ENCODE measurements at regions of chr3 and their contacts with region 1.

Region 1: GRCh38 chr3:151282921-151283320 is 4.6 kb upstream of the P2RY14 start:
- DNase-seq: no peak
- H3K4me3 Mint-ChIP-seq: no peak overlapping the region
- H3K27ac Mint-ChIP-seq: peak overlapping the region; percentile 72
- H3K4me1 Mint-ChIP-seq: peaks cover 51% of the 10 kb centered on the region
- H3K27me3 Mint-ChIP-seq: no peaks in the 10 kb centered on the region

Region 2: DNA sequence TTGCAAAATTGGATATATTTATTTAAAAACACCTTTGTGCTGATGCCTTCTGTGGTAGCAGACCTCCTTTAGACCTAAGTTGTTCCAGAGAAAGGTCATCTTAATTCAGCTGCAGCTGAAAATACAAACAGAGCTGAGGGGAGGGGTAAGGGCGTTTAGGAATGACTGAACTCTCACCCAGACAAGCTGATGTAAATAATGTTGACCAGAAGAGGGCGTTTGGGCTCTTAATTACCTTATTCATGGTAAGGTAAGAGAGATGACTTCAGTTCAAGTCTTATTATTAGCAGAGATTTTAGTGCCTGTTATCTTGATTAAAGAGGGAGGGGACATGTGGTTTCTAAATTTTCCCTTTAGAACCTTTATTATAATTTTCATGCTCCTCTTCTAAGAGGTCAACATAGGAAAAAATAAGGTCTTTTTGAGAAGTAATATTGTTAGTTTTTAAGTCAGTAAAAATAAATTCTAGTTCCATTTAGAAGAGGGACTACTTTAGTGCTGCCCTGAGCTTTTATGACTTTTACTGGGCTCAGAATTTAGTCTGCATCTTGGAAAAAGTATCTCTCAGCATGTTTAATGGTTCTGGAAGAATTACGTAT is 126.2 kb before region 1 on chr3:
- CTCF ChIA-PET with region 1: interaction called, 13 read pairs
- DNase-seq: peak; percentile 50
- H3K4me3 Mint-ChIP-seq: no peak overlapping the region
- H3K27ac Mint-ChIP-seq: no peak overlapping the region
- H3K4me1 Mint-ChIP-seq: no peaks in the 10 kb centered on the region
- H3K27me3 Mint-ChIP-seq: peaks cover 17% of the 10 kb centered on the region

Region 3: DNA sequence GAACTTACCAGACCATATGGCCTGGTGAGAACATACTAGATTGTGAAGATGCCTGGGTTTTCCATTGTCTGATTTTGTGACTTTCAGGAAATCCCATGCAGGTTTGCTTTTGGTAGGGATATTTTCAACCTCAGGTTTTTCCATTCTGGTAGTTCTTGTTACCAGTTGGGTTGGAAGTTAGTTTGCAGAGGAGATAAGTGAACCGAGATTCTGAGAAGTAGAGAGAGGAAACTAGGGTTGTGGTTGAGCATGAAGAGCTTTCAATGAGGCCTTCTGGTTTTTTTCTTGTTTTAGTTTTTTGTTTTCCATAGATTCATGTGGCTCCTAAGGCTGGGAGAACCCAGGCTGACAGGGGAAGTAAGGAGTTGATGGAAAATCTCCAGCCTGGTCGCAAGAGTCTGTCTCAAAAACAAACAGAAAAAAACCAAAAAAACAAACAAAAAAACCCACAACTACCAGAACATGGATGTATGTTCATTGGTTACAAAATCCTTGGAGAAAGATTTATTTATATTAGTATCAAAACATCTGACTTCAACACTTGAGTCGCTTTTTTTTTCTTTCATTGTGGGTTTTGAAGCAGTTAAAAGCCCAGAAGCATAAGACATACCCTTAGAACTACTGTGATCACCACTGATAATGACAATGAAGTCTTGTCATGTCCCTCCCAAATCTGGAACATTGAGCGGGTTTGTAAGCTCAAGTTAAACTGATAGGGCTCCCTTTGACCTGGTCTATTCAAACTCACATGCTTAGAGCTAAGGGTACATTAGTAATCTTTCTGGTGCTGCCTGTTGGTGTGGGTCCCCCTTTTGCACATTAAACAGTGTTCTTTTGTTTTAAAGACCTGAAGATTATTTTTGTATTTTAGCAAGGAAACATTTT is 83.1 kb before region 1 on chr3:
- CTCF ChIA-PET with region 1: interaction called, 11 read pairs
- DNase-seq: no peak
- H3K4me3 Mint-ChIP-seq: peak overlapping the region; percentile 88
- H3K27ac Mint-ChIP-seq: peak overlapping the region; percentile 98
- H3K4me1 Mint-ChIP-seq: peaks cover 46% of the 10 kb centered on the region
- H3K27me3 Mint-ChIP-seq: no peaks in the 10 kb centered on the region

Region 4: GRCh38 chr3:151234825-151235224 is 48.1 kb before region 1 on chr3:
- CTCF ChIA-PET with region 1: interaction called, 201 read pairs
- DNase-seq: no peak
- H3K4me3 Mint-ChIP-seq: no peak overlapping the region
- H3K27ac Mint-ChIP-seq: no peak overlapping the region
- H3K4me1 Mint-ChIP-seq: peaks cover 22% of the 10 kb centered on the region
- H3K27me3 Mint-ChIP-seq: peaks cover 4% of the 10 kb centered on the region

Region 5: GRCh38 chr3:151265866-151266265 is 17.1 kb before region 1 on chr3:
- CTCF ChIA-PET with region 1: interaction called, 12 read pairs
- DNase-seq: no peak
- H3K4me3 Mint-ChIP-seq: no peak overlapping the region
- H3K27ac Mint-ChIP-seq: no peak overlapping the region
- H3K4me1 Mint-ChIP-seq: peaks cover 24% of the 10 kb centered on the region
- H3K27me3 Mint-ChIP-seq: peaks cover 12% of the 10 kb centered on the region